ENCODE measurements at regions of chr21 and their contacts with region 1.

Region 1: DNA sequence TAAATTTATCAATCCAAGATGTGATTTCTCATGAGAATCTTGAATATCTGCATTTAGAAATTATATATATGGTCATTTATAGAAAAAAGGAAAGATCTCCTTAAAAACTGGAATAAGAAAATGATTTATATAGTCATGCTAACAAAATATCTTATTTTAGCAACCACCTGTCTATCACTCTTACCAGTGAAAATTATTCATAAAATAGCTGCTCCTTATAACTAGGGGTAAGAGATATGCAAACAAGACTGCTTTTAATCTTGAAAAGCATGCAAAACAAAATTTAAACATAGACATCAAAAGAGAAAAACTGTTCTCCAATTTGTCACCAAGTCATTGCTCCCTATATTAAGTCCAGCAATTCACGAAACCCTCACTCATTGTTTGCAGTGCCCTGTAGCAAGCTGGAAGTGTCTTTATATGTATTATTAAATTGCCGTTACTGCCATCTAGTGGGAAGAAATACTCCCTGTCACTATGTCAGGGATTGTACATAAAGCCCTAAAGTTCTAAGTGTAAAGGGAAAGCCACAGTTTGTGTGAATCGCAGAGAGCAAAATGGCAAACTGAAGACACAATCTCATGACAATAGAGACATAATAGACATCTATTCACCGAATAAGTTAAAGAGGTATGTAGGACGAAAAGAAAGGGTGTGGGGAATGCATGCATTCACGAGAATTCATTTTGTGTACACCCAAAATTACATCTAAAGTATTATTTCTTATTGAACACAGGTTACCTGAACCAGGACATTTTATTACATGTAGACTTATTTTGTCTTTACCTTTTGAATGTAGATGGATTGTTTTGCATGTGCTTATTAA is 600.5 kb downstream of the USP25 start:
- DNase-seq: peak; percentile 15
- H3K4me3 Mint-ChIP-seq: no peak overlapping the region
- H3K27ac Mint-ChIP-seq: no peak overlapping the region
- H3K4me1 Mint-ChIP-seq: no peaks in the 10 kb centered on the region
- H3K27me3 Mint-ChIP-seq: no peaks in the 10 kb centered on the region
- CTCF ChIP-seq: no peak

Region 2: GRCh38 chr21:15894596-15894995 is 435.7 kb before region 1 on chr21:
- CTCF ChIA-PET with region 1: no interaction called
- intact Hi-C with region 1: loop called (anchors 2 kb)
- DNase-seq: no peak
- H3K4me3 Mint-ChIP-seq: no peak overlapping the region
- H3K27ac Mint-ChIP-seq: no peak overlapping the region
- H3K4me1 Mint-ChIP-seq: no peaks in the 10 kb centered on the region
- H3K27me3 Mint-ChIP-seq: no peaks in the 10 kb centered on the region
- CTCF ChIP-seq: no peak

Region 3: GRCh38 chr21:16002874-16003466 is 327.3 kb before region 1 on chr21:
- CTCF ChIA-PET with region 1: no interaction called
- intact Hi-C with region 1: loop called (anchors 5 kb)
- DNase-seq: no peak
- H3K4me3 Mint-ChIP-seq: no peak overlapping the region
- H3K27ac Mint-ChIP-seq: no peak overlapping the region
- H3K4me1 Mint-ChIP-seq: peaks cover 7% of the 10 kb centered on the region
- H3K27me3 Mint-ChIP-seq: no peaks in the 10 kb centered on the region
- CTCF ChIP-seq: no peak

Region 4: GRCh38 chr21:16082038-16082816 is 248.1 kb before region 1 on chr21:
- CTCF ChIA-PET with region 1: interaction called, 3 read pairs
- intact Hi-C with region 1: loop called (anchors 1 kb)
- DNase-seq: no peak
- H3K4me3 Mint-ChIP-seq: no peak overlapping the region
- H3K27ac Mint-ChIP-seq: no peak overlapping the region
- H3K4me1 Mint-ChIP-seq: peaks cover 16% of the 10 kb centered on the region
- H3K27me3 Mint-ChIP-seq: no peaks in the 10 kb centered on the region
- CTCF ChIP-seq: no peak